ENCODE measurements at regions of chr6 and their contacts with region 1.

Region 1: GRCh38 chr6:90663863-90664262 is 77.0 kb upstream of the MAP3K7 start:
- DNase-seq: no peak
- H3K4me3 ChIP-seq: no peak overlapping the region
- H3K27ac ChIP-seq: no peak overlapping the region
- H3K4me1 ChIP-seq: no peaks in the 10 kb centered on the region
- H3K27me3 ChIP-seq: no peaks in the 10 kb centered on the region
- CTCF ChIP-seq: no peak
- EP300 ChIP-seq: no peak
- POLR2A ChIP-seq: no peak

Region 2: GRCh38 chr6:90650041-90650940 is 13.6 kb before region 1 on chr6:
- intact Hi-C with region 1: loop called (anchors 1 kb)
- DNase-seq: no peak
- H3K4me3 ChIP-seq: no peak overlapping the region
- H3K27ac ChIP-seq: no peak overlapping the region
- H3K4me1 ChIP-seq: no peaks in the 10 kb centered on the region
- H3K27me3 ChIP-seq: peaks cover 0 to 4% (median 0%) of the 10 kb centered on the region in 4 donors
- CTCF ChIP-seq: no peak
- EP300 ChIP-seq: no peak
- POLR2A ChIP-seq: no peak

Measured in esophagus muscularis mucosa (tissue), 4 donors.